A549 (cell line): ENCODE measurements at regions of chr2 and their contacts with region 1.

Region 1: GRCh38 chr2:67476809-67477790 is 80.0 kb downstream of the ETAA1 start:
- DNase-seq: peak; percentile 27 to 65
- ATAC-seq: peak; percentile 91 to 93
- H3K4me3 ChIP-seq: no peak overlapping the region
- H3K27ac ChIP-seq: 0 out of 6 replicates have a peak overlapping the region, but pooled peaks of 1 of the 2 experiments have one; percentile 26
- H3K4me1 ChIP-seq: peaks cover 8% of the 10 kb centered on the region; the same call in 1 of the 3 replicates
- CTCF ChIP-seq: peak; percentile 86
- EP300 ChIP-seq: no peak
- POLR2A ChIP-seq: no peak
- RAD21 ChIP-seq: peak; percentile 87 to 91

Region 2: DNA sequence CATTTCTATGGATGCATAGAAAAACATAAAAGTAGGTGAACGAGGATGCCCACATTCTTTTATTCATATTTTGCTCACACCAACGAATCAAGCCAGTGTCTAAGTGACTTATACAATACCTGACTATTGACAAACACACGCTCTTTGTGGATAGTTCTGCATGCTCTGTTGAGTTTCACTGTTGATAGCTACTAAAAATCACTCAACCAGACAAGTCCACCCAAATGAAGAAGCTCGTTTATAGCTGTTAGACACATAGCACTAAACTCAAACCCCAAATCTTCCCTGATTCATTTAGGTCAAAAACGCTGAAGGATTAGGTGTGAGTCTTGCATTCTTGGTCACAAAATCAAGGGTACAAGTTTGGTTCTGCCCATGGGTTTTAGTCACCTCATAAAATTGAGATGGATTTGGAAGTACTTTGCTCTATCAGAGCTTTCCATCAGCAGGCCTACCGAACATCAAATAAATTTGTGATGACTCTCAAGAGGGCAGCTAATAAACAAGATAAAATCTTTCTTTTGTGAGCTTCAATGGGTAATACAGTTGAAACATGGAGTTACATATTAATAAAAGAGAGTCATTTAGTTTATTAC is 172.7 kb before region 1 on chr2:
- CTCF ChIA-PET with region 1: no interaction called
- POLR2A ChIA-PET with region 1: no interaction called
- DNase-seq: no peak
- ATAC-seq: no peak
- H3K4me3 ChIP-seq: no peak overlapping the region
- H3K27ac ChIP-seq: no peak overlapping the region
- H3K4me1 ChIP-seq: peaks cover 6% of the 10 kb centered on the region; the same call in 2 of the 3 replicates
- CTCF ChIP-seq: no peak
- EP300 ChIP-seq: no peak
- POLR2A ChIP-seq: no peak
- RAD21 ChIP-seq: no peak

Region 3: GRCh38 chr2:67393237-67393636 is 83.9 kb before region 1 on chr2:
- CTCF ChIA-PET with region 1: interaction called, 12 read pairs
- POLR2A ChIA-PET with region 1: no interaction called
- DNase-seq: no peak
- ATAC-seq: no peak
- H3K4me3 ChIP-seq: no peak overlapping the region
- H3K27ac ChIP-seq: no peak overlapping the region
- H3K4me1 ChIP-seq: peaks cover 32% of the 10 kb centered on the region; the same call in 2 of the 3 replicates
- CTCF ChIP-seq: no peak
- EP300 ChIP-seq: no peak
- POLR2A ChIP-seq: no peak
- RAD21 ChIP-seq: no peak

Region 4: DNA sequence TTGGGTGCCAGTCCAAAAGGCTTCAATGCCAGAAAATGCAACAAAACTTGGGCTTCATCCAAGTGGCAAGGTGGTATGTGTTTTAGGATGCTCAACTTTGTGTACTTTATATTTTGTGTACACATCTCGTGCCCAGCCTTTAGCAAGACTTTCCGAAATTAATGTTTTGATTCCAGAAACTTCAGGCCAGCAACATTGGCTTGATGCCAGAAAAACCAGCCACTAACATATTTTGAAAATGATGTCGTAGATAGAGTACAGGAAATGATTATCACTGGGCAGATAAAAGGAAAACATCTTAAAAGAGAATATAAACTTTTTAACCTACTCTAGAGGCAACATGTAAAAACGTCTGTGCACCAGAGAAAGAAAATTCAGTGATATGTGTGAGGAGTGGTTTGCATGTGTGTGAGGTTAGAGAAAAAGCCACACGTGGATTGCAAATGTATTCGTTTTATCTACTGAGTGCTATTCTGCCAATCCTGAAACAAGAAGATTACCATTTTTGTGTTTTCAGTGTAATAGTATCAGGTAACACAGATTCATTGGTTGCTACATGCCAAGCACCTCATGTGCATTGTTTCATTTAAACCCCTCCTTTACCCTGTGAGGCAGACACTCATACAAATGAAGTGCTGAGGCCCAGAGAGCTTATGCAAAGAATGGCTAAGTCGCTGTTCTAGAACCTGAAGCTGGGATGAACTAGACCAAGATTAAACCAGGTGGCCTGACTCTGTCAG is 320.9 kb after region 1 on chr2:
- CTCF ChIA-PET with region 1: no interaction called
- POLR2A ChIA-PET with region 1: no interaction called
- DNase-seq: no peak
- ATAC-seq: no peak
- H3K4me3 ChIP-seq: no peak overlapping the region
- H3K27ac ChIP-seq: no peak overlapping the region
- H3K4me1 ChIP-seq: no peaks in the 10 kb centered on the region
- CTCF ChIP-seq: no peak
- EP300 ChIP-seq: no peak
- POLR2A ChIP-seq: no peak
- RAD21 ChIP-seq: no peak